Heart right ventricle (tissue), 16 donors: ENCODE measurements at regions of chr4 and their contacts with region 1.

Region 1: GRCh38 chr4:1346781-1347409 is at the start of gene UVSSA:
- DNase-seq: peak; percentile 100
- ATAC-seq: peak; percentile 93 to 99 (median 97)
- H3K4me3 ChIP-seq: peak within 1 kb of the TSS; percentile 75 to 97 (median 90)
- H3K27ac ChIP-seq: peak within 1 kb of the TSS; percentile 94 to 100 (median 98)
- H3K4me1 ChIP-seq: peaks cover 7 to 38% (median 21%) of the 10 kb centered on the region in 9 donors
- H3K27me3 ChIP-seq: no peaks in the 10 kb centered on the region
- CTCF ChIP-seq: no peak
- total RNA-seq, gene UVSSA: 5.2 to 8.3 (median 6.6) TPM

Region 2: DNA sequence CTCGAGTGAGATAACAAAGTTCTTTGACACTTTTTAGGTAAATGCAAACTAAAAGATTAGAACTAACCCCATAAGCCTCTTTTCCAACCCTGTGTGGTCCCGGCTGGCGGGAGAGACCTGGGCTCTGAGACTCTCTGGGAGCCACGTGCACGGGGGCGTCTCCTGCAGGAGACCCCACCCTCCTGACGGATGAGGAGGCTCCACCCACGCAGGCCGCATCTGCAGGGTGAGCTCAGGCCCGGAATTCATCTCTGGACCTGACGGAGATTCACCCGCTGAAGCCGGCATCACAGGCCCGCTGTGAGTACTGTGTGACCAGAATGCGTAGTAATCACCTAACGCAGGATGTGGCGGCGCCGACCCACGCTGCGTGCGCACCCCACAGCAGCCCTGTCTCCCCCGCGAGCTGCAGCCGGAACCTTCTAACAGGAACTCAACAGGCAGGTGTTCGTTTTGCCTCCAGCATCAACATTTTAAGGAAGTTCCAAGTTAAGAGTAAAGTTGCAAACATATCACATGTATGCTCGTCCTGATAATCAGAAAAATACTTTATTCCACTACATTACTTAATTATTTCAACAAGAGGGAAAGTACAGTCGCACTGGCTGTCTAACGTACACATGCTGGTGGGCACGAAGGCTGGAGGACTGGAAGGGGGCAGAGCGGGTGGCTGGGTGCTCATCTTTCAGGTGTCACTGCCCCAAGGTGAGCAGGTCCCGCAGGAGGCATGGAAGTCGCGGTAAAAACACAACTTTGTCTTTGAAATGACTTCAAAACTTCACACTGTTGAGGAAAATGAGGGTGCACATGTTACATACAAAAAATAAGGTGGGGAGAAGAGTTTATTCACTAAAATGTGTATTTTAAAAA is 290.9 kb before region 1 on chr4:
- intact Hi-C with region 1: no loop called
- DNase-seq: no peak
- ATAC-seq: peak; percentile 18 to 62 (median 40)
- H3K4me3 ChIP-seq: peak overlapping the region in 7 of 10 donors; percentile 22 to 43 (median 34)
- H3K27ac ChIP-seq: peak overlapping the region in 1 of 10 donors; percentile 56
- H3K4me1 ChIP-seq: peaks cover 0 to 22% (median 9%) of the 10 kb centered on the region in 9 donors
- H3K27me3 ChIP-seq: peaks cover 0 to 73% (median 52%) of the 10 kb centered on the region in 7 donors
- CTCF ChIP-seq: no peak

Region 3: DNA sequence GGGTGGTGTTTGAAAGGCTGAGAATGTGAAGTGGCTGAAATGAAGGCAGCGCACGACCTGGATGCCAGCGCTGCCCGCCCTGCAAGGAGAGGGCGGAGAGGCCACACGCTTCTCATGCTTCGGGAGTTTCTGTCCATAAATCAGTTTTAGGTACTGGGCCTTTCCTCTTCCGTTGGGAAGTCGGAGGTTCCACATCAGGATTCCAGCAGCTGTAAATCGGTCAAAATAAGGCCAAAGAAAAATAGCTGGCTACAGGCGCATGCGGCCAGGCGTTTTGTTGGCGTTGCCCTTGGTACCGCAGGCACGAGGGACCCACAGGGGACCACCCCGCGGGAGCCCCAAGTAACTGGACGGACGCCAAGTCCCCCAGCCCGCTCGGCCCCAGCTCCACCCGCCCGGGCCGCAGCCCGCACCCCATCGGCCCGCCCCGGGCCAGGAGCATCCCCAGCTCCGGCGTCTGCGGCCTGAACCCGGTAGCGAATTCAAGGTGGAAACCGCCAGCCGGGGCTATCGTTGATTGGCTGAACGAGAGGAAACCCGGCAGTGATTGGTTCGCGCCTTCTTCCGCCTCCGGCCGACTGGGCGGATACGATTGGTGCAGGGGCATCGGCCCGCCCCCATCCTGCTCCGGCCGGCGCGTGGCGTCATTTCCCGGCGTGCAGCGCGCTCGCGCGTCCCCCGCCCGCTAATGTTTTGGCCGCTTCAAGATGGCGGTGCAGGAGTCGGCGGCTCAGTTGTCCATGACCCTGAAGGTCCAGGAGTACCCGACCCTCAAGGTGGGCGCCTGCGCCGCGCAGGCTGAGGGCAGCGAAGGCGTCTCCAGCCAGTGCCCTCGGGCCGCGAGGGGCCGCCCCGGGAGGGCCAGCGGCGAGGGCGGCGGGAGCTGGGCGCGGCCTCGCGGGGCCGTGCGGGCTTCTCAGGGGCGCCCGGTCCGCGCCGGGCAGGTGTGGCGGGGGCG is 57.4 kb before region 1 on chr4 and contains the start of gene MAEA:
- intact Hi-C with region 1: loop called in 7 of 10 experiments (anchors 2 to 10 kb)
- DNase-seq: peak; percentile 97
- ATAC-seq: peak; percentile 96 to 99 (median 99)
- H3K4me3 ChIP-seq: peak within 1 kb of the TSS; percentile 82 to 99 (median 96)
- H3K27ac ChIP-seq: peak within 1 kb of the TSS; percentile 81 to 97 (median 94)
- H3K4me1 ChIP-seq: peaks cover 19 to 52% (median 46%) of the 10 kb centered on the region in 9 donors
- H3K27me3 ChIP-seq: no peaks in the 10 kb centered on the region
- CTCF ChIP-seq: no peak
- total RNA-seq, gene MAEA: 39.1 to 72.8 (median 50.3) TPM

Region 4: GRCh38 chr4:1309261-1310010 is 37.5 kb before region 1 on chr4:
- intact Hi-C with region 1: loop called in 2 of 10 experiments (anchors 1 to 5 kb)
- DNase-seq: peak; percentile 86 to 89
- ATAC-seq: peak; percentile 93 to 98 (median 96)
- H3K4me3 ChIP-seq: peak overlapping the region in 9 of 10 donors; percentile 21 to 54 (median 50)
- H3K27ac ChIP-seq: peak overlapping the region in 9 of 10 donors; percentile 38 to 62 (median 57)
- H3K4me1 ChIP-seq: peaks cover 17 to 54% (median 33%) of the 10 kb centered on the region in 9 donors
- H3K27me3 ChIP-seq: no peaks in the 10 kb centered on the region
- CTCF ChIP-seq: no peak

Region 5: DNA sequence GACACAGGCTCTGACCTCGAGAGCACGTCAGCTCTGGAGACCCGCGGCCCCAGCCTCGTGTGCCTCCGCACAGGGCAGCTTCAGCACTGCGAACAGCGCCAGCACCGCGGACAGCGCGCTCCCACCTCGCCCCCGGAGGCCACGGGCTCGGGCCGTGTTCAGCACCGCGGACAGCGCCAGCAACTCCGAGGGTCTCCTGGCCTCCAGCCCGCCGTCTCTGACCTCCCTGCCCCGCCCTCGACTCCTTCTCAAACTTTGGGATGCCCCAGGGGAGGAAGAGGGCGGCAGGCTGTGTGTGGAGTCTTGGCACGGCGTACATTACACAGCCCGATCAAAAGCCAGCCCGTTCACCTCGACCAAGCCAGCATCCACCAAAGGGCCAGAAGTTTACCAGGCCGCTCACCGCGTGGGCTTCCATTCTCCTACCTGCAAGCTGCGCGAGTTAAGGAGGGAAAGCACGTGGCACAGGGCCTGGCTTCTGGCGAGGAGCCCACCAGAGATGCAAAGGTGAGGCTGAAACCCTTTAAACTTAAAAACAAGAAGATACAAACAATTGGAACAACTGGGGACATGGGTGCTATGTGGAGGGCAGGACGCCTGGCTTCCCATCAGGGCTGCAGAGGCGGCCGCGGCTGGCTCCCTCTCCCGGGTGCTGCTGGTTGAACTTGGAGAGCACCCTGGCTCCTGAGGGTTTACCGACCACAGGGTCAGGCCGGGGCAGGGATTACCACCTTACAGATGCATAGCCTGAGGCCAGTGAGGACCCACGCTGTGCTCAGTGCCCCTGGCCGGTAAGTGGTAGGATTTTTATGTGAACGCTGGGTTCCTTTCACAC is 63.8 kb after region 1 on chr4:
- intact Hi-C with region 1: no loop called
- DNase-seq: peak; percentile 44 to 63
- ATAC-seq: peak; percentile 71 to 87 (median 82)
- H3K4me3 ChIP-seq: no peak overlapping the region
- H3K27ac ChIP-seq: no peak overlapping the region
- H3K4me1 ChIP-seq: peaks cover 0 to 13% (median 5%) of the 10 kb centered on the region in 9 donors
- H3K27me3 ChIP-seq: peaks cover 38 to 97% (median 94%) of the 10 kb centered on the region in 7 donors
- CTCF ChIP-seq: no peak

Region 6: GRCh38 chr4:1721004-1721665 is 374.2 kb after region 1 on chr4 and contains the starts of genes TACC3 and TMEM129:
- intact Hi-C with region 1: loop called in 5 of 10 experiments (anchors 5 to 10 kb)
- DNase-seq: peak; percentile 90 to 93
- ATAC-seq: peak; percentile 88 to 94 (median 92)
- H3K4me3 ChIP-seq: peak within 1 kb of the TSS; percentile 64 to 97 (median 84)
- H3K27ac ChIP-seq: peak within 1 kb of the TSS; percentile 92 to 99 (median 94)
- H3K4me1 ChIP-seq: peaks cover 23 to 70% (median 42%) of the 10 kb centered on the region in 9 donors
- H3K27me3 ChIP-seq: no peaks in the 10 kb centered on the region
- CTCF ChIP-seq: no peak
- total RNA-seq, gene TACC3: 2.3 to 15.6 (median 3.9) TPM
- total RNA-seq, gene TMEM129: 28.1 to 45.6 (median 34.3) TPM